Mucosa of descending colon (tissue), 3 donors: ENCODE measurements at regions of chr14 and their contacts with region 1.

Region 1: DNA sequence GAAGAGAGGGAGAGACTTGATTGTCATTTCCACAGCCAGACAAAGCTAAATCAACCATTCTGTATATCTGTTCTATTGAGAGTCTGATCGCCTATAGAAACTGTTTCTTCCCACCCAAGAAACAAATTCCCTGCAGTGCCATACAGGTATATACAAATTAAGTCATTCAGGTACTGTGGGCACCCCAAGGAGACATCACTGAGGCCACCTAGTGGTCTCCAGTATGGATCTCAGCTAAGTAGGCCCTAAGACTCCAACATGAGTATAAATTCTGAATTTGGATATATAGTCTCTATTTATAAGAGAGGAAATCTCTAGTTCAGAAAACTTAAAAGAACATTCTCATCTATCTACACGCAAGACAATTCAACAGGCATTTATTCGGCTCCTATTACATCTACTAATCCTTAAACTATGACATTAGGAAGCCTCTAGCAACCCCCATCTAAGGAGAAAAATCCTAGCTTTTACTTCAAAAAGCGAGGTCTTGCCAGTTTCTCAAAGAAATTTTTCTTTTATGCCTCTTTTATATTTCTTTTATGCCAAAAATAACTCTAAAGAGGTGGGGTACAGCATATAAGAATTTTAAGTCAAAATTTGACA is 62.6 kb downstream of the DCAF5 start:
- DNase-seq: peak in 1 of 3 donors; percentile 64
- ATAC-seq: peak; percentile 76
- H3K4me3 ChIP-seq: no peak overlapping the region
- H3K4me1 ChIP-seq: no peaks in the 10 kb centered on the region
- CTCF ChIP-seq: peak; percentile 36

Region 2: DNA sequence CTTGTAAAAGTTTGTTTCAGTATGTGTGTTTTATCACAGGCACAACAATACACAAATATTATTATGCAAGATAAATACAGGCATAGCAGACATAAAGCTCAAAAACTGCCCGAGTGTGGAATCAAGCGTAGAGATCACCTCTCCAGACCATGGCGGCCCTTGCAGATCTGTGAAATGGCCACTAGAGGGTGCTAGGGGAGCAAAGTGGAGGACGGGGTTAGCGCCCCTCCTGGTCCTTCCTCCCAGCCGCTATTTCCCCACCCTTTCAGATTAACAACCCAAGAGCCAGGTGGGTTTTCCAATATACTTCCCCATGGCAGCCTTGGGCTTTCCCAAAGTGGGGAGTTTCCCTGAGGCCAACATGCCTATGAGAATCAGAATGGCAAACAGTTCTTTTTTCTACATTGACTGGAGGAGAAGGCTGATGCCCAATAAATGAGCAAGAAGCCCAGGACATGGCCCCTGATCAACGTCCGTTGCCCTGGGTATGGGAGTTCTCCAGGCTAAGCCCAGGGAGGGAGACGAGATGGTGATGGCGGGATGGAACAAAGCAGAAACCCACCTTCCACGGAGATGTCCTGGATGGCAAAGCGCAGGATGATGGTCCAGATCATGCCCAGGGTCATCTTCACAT is 178.6 kb before region 1 on chr14:
- intact Hi-C with region 1: loop called in 1 of 2 experiments (anchors 10 kb)
- DNase-seq: peak in 2 of 3 donors; percentile 74 to 78
- ATAC-seq: peak; percentile 95
- H3K4me3 ChIP-seq: no peak overlapping the region
- H3K4me1 ChIP-seq: no peaks in the 10 kb centered on the region
- CTCF ChIP-seq: peak; percentile 93

Region 3: GRCh38 chr14:68961781-68962584 is 128.3 kb before region 1 on chr14:
- intact Hi-C with region 1: loop called in 1 of 2 experiments (anchors 10 kb)
- DNase-seq: no peak
- ATAC-seq: no peak
- H3K4me3 ChIP-seq: no peak overlapping the region
- H3K4me1 ChIP-seq: peaks cover 42% of the 10 kb centered on the region
- CTCF ChIP-seq: no peak

Region 4: GRCh38 chr14:69017706-69018105 is 72.6 kb before region 1 on chr14:
- intact Hi-C with region 1: no loop called
- DNase-seq: no peak
- ATAC-seq: no peak
- H3K4me3 ChIP-seq: no peak overlapping the region
- H3K4me1 ChIP-seq: peaks cover 13% of the 10 kb centered on the region
- CTCF ChIP-seq: no peak